GM10248 (cell line): ENCODE measurements at regions of chr3 and their contacts with region 1.

Region 1: DNA sequence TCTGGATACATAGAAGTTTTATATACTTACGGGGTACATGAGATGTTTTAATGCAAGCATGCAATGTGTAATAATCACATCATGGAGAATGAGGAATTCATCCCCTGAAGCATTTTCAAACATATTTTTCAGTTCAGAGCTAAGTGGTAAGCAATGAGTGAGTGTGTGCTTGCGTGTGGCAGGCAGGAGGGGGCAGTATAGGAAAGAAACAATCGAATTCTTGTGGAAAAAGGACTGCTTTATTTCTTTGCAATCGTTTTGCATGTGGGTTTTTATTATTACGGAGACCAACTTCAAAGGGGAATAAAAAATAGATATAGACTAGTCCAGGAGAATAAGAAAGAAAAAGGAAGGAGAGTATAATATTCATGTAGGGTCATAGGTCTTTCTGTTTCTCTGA is 271.6 kb downstream of the CHL1 start:
- DNase-seq: no peak
- CTCF ChIP-seq: peak; percentile 64

Region 2: DNA sequence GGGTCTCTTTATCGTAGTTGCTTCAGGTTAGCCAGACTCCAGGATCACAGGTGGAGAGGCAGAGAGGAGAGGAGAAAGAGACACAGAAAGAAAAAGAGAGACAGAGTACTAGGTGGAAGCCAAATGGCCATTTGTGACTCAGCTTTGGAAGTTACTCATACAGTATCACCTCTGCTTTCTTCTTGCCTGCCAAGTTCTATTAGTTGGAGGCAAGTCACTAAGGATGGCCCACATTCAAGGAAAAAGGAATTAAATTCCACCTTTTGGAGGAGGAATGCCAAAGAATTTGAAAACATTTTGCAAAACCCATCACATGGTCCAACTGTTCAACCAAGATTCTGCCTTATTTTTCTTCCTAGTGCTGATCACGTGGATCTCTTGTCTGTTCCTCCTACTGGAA is 19.4 kb after region 1 on chr3:
- CTCF ChIA-PET with region 1: interaction called, 16 read pairs
- POLR2A ChIA-PET with region 1: no interaction called
- DNase-seq: no peak
- CTCF ChIP-seq: no peak